ENCODE measurements at regions of chr17 and their contacts with region 1.

Region 1: GRCh38 chr17:60036796-60037612 is 41.7 kb downstream of the HEATR6 start:
- DNase-seq: peak; percentile 61
- ATAC-seq: peak; percentile 96
- H3K4me3 ChIP-seq: no peak overlapping the region
- H3K27ac ChIP-seq: no peak overlapping the region
- H3K4me1 ChIP-seq: no peaks in the 10 kb centered on the region
- H3K27me3 ChIP-seq: peaks cover 3% of the 10 kb centered on the region; the same call in 1 of the 2 replicates
- CTCF ChIP-seq: peak; percentile 80
- POLR2A ChIP-seq: no peak
- RAD21 ChIP-seq: peak; percentile 48

Region 2: DNA sequence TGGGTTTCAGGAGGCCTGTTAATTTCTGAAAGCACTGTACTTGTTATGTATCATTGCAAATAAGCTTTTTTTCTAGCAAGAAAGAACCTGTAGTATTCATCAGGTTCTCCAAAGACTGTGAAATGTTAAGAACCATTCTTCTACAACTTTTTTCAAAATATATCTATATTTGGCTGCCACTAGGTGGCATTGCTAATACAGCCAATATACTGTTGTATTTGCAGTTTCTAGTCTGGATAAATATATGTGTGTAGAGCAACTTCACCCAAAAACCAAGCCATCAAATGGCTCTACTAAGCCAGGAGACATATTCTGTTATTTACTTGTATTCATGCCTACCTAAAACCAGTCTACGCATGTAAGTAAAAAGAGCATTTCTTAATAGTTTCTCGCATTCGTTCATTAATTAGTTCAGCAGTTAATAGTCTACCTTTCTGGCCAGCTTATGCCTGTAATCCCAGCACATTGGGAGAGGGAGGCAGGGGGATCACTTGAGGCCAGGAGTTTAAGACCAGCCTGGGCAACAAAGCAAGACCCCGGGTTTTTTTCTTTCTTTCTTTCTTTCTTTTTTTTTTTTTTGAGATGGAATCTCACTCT is 290.1 kb before region 1 on chr17:
- CTCF ChIA-PET with region 1: no interaction called
- POLR2A ChIA-PET with region 1: no interaction called
- dilution Hi-C with region 1: no loop called
- in situ Hi-C with region 1: no loop called
- intact Hi-C with region 1: loop called (anchors 10 kb)
- DNase-seq: peak; percentile 71
- ATAC-seq: peak; percentile 88
- H3K4me3 ChIP-seq: no peak overlapping the region
- H3K27ac ChIP-seq: peak overlapping the region; percentile 20; the same call in 1 of the 2 replicates
- H3K4me1 ChIP-seq: peaks cover 3% of the 10 kb centered on the region
- H3K27me3 ChIP-seq: no peaks in the 10 kb centered on the region
- CTCF ChIP-seq: peak; percentile 79
- POLR2A ChIP-seq: no peak
- RAD21 ChIP-seq: peak; percentile 81

Region 3: GRCh38 chr17:59914274-59914854 is 122.6 kb before region 1 on chr17:
- CTCF ChIA-PET with region 1: interaction called, 5 read pairs
- POLR2A ChIA-PET with region 1: no interaction called
- dilution Hi-C with region 1: no loop called
- in situ Hi-C with region 1: loop called (anchors 10 kb)
- intact Hi-C with region 1: loop called (anchors 10 kb)
- DNase-seq: peak; percentile 60
- ATAC-seq: peak; percentile 81
- H3K4me3 ChIP-seq: no peak overlapping the region
- H3K27ac ChIP-seq: no peak overlapping the region
- H3K4me1 ChIP-seq: no peaks in the 10 kb centered on the region
- H3K27me3 ChIP-seq: no peaks in the 10 kb centered on the region
- CTCF ChIP-seq: peak; percentile 64
- POLR2A ChIP-seq: no peak
- RAD21 ChIP-seq: peak; percentile 55

Region 4: DNA sequence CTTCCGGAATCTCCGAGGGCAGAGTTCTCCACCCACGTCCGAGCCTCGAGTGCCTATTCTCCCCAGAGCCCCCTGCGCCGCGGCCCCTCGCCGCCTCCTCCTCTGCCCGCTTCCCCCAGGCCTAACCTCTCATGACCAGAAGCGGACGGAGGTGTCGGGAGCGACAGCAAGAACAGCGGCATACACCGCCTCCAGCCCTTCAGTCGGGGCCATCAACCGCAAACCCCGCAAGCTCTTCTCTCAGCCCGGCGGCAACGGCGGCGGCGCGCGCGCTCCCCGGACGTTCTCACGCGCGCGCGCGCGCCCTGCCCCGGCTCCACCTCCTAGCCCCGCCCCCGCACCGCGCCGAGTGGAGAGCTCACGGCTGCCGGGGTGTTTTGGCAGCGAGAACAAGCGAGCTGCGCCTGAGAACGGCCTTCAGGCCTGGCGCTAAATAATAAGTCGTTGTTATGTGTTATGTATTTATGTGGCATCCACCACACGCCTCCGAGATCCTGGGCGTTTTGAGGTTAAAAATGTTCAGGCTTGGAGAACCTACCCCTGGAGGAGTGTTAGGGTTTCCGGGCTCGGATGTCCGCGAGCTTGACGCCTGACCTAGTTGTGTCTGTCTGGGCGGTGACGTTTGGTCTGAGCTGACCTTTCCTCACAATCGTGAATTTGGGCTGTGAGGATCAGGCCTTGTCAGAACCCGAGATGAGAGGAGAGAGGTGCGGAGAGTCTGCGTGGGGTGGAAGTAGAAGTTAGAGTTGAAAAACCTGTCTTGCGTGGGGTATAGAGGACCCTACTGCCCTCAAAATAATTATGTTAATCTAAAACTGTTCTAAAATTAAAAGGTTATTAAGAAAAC is 72.3 kb before region 1 on chr17 and contains the start of gene RNFT1:
- CTCF ChIA-PET with region 1: interaction called, 3 read pairs
- POLR2A ChIA-PET with region 1: no interaction called
- dilution Hi-C with region 1: no loop called
- in situ Hi-C with region 1: loop called (anchors 10 kb)
- intact Hi-C with region 1: loop called (anchors 10 kb)
- DNase-seq: peak; percentile 75
- ATAC-seq: peak; percentile 95
- H3K4me3 ChIP-seq: peak within 1 kb of the TSS; percentile 83
- H3K27ac ChIP-seq: peak within 1 kb of the TSS; percentile 82
- H3K4me1 ChIP-seq: peaks cover 5% of the 10 kb centered on the region
- H3K27me3 ChIP-seq: no peaks in the 10 kb centered on the region
- CTCF ChIP-seq: no peak
- POLR2A ChIP-seq: no peak; the same call in 1 of the 2 replicates
- RAD21 ChIP-seq: no peak
- total RNA-seq, gene RNFT1: 18.3 and 22.2 TPM in 2 replicates